ENCODE measurements at regions of chr9 and their contacts with region 1.

Region 1: GRCh38 chr9:117815315-117815714 is 111.1 kb downstream of the TLR4 start:
- DNase-seq: no peak
- ATAC-seq: no peak
- H3K4me3 ChIP-seq: no peak overlapping the region
- H3K27ac ChIP-seq: no peak overlapping the region
- H3K4me1 ChIP-seq: no peaks in the 10 kb centered on the region
- H3K27me3 ChIP-seq: no peaks in the 10 kb centered on the region
- CTCF ChIP-seq: no peak
- POLR2A ChIP-seq: no peak

Region 2: DNA sequence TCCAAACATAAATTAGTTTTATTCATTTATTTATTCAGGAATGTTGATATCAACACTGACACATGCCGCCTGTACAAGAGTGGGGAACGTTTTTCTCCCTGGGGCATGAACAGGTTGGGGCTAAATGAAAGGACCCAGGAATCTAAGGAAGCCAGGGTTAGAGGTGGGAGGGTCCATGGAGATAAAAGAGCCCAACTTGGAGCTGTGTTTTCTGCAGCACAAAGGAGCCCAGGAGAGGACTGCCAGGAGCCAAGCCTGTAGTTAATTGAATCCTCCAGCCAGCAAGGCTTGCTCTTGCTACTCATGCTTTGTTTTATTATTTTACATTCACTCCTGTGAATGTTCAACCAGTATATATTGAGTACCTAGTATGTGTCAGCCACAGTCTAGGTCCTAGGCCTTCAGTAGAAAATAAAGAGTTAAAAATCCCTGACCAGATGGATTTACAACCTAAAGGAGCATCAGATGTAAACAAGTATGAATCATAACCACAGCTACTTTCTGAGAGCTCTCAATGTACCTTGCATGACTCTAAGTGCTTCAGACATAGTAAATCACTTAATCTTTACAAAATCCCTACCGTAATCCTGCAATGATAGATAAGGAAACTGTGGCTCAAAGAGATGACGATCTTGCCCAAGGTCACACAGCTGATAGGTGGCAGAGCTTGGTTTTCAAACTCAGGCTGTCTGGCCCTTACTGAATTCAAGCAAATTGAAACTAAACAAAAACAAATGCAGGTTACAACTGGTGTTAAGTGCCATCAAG is 470.2 kb before region 1 on chr9:
- in situ Hi-C with region 1: no loop called
- intact Hi-C with region 1: no loop called
- DNase-seq: no peak
- ATAC-seq: no peak
- H3K4me3 ChIP-seq: no peak overlapping the region
- H3K27ac ChIP-seq: no peak overlapping the region
- H3K4me1 ChIP-seq: no peaks in the 10 kb centered on the region
- H3K27me3 ChIP-seq: no peaks in the 10 kb centered on the region
- CTCF ChIP-seq: no peak
- POLR2A ChIP-seq: no peak

Region 3: DNA sequence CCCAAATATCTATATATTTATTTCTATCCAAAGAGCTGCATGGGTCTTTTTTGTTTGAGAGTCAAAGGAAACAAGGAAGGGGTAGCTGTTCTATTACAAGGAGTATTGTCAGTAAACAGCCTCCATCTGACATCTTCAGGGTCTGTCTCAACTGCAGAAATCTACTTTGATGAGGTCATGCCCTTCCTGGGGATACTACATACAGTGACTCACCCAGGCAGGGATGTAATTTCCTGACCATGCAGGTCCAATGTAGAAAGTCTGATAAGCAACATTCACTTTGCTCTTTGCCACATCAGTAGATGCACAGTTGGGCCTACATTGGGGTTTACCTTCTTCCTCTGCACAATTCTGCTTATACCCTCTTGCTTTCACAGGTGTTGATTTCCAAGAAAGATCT is 54.4 kb after region 1 on chr9:
- in situ Hi-C with region 1: loop called in 1 of 4 experiments (anchors 10 kb)
- intact Hi-C with region 1: no loop called
- DNase-seq: no peak
- ATAC-seq: no peak
- H3K4me3 ChIP-seq: no peak overlapping the region
- H3K27ac ChIP-seq: no peak overlapping the region
- H3K4me1 ChIP-seq: no peaks in the 10 kb centered on the region
- H3K27me3 ChIP-seq: no peaks in the 10 kb centered on the region
- CTCF ChIP-seq: no peak
- POLR2A ChIP-seq: no peak